Activated T-helper 2 cell treated with anti-CD3 and anti-CD28 coated beads, Interferon-gamma antibody, Interleukin-2, Interleukin-4, amounts not matched to agents 10 μg/mL and 5 μg/mL and 100 μg/mL, durations not matched to agents 14 hours and 24 hours and 36 hours (primary cell): ENCODE measurements at regions of chr11 and their contacts with region 1.

Region 1: GRCh38 chr11:108697872-108698473 is 33.1 kb downstream of the DDX10 start:
- DNase-seq: peak; percentile 13
- H3K4me3 Mint-ChIP-seq: no peak overlapping the region
- H3K27ac Mint-ChIP-seq: no peak overlapping the region
- H3K4me1 Mint-ChIP-seq: peaks cover 8% of the 10 kb centered on the region
- H3K27me3 Mint-ChIP-seq: no peaks in the 10 kb centered on the region

Region 2: GRCh38 chr11:108743851-108744250 is 45.9 kb after region 1 on chr11:
- intact Hi-C with region 1: no loop called
- DNase-seq: no peak
- H3K4me3 Mint-ChIP-seq: no peak overlapping the region
- H3K27ac Mint-ChIP-seq: no peak overlapping the region
- H3K4me1 Mint-ChIP-seq: peaks cover 5% of the 10 kb centered on the region
- H3K27me3 Mint-ChIP-seq: no peaks in the 10 kb centered on the region

Region 3: DNA sequence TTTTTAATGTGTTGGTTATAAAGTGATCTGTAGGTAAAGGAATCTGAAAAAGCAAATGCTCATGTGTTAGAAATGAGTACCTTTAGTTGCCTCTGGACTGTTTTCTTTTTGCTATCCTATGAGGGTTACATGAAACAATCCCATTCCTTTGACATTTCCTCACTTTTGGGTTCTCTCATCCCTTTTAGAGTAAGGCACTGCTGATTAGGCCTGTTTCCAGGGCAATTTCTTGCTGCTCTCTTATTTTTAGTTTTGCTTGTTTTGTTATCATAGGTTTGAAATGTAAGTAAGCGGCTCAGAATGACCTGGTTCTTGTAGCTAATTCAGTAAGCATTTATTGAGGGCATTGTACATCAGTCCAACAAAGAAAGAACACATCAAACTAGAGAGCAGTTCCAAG is 105.8 kb after region 1 on chr11:
- intact Hi-C with region 1: no loop called
- DNase-seq: no peak
- H3K4me3 Mint-ChIP-seq: no peak overlapping the region
- H3K27ac Mint-ChIP-seq: no peak overlapping the region
- H3K4me1 Mint-ChIP-seq: peaks cover 3% of the 10 kb centered on the region
- H3K27me3 Mint-ChIP-seq: no peaks in the 10 kb centered on the region

Region 4: DNA sequence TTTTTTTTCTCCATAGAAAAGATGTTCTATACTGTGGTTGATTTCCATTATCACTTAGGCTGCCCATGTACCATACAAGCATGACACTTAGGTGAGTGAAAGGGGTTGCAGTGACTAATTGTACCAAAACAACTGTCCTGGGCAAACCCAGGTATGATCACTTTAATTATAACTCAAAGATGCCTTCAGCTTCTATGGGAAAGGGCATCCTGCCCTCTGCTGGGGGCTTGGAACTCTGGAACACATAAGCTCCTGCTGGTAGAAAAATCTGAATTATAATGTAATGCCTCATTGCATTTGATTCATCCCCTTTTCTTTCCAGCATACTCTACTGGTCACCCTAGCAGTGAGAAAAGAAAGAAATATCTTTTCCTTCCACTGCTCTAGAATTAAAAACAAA is 173.2 kb after region 1 on chr11:
- intact Hi-C with region 1: loop called (anchors 1 kb)
- DNase-seq: no peak
- H3K4me3 Mint-ChIP-seq: no peak overlapping the region
- H3K27ac Mint-ChIP-seq: no peak overlapping the region
- H3K4me1 Mint-ChIP-seq: peaks cover 22% of the 10 kb centered on the region
- H3K27me3 Mint-ChIP-seq: no peaks in the 10 kb centered on the region